ENCODE measurements at regions of chr1 and their contacts with region 1.

Region 1: DNA sequence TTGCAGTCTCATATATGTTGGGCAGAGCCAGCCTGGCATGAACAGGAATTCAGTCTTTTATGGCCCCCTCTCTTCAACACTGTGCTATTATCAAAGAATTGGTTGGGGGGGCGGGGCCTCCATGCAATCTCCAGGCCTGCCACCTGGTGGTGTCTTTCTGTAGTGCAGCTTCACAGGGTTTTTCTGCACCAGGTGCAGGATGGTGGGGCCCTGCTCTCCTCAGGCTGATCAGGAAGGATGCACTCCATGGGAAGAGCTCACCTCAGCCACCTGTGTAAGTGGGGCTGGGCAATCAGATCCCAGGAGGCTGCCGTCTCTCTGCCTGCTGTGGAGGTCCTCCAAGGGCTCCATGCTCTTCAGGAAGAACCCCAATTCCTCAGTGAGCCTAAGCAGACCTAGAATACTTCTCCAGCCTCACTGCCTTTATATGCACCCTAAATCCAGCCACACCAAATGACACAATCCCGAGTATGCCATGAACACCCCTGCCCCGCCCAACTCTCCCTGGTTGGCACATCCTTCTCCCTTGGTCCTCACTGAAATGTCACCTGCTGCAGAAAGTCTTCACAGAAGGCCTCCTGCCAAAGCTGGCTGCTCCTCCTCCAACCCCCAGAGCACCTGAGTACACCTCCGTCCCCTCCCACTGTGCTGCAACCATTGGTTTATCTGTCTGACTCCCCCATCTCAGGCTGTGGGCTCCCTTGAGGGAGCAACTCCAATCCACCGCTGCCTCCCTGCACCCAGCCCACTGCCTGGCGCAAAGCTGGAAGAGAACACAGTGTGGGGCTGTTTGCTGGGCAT is 16.5 kb downstream of the STK40 start:
- DNase-seq: peak; percentile 52 to 85
- ATAC-seq: peak; percentile 55 to 69; a peak in 5 of 6 replicates
- H3K4me3 ChIP-seq: no peak overlapping the region
- H3K27ac ChIP-seq: peak overlapping the region in 1 of 2 experiments; percentile 61; a peak in 3 of 6 replicates
- H3K4me1 ChIP-seq: peaks cover 38% of the 10 kb centered on the region
- CTCF ChIP-seq: peak; percentile 65
- EP300 ChIP-seq: no peak
- POLR2A ChIP-seq: no peak
- RAD21 ChIP-seq: peak; percentile 59 to 68

Region 2: GRCh38 chr1:36385410-36386257 is 16.4 kb after region 1 on chr1 and contains the start of gene STK40:
- CTCF ChIA-PET with region 1: interaction called, 10 read pairs
- POLR2A ChIA-PET with region 1: interaction called, 5 read pairs
- DNase-seq: peak; percentile 83 to 98
- ATAC-seq: peak; percentile 83 to 94
- H3K4me3 ChIP-seq: peak within 1 kb of the TSS; percentile 72
- H3K27ac ChIP-seq: peak within 1 kb of the TSS; percentile 96 to 100
- H3K4me1 ChIP-seq: peaks cover 28% of the 10 kb centered on the region
- CTCF ChIP-seq: no peak
- EP300 ChIP-seq: no peak
- POLR2A ChIP-seq: peak; percentile 29; the same call in 1 of the 2 replicates
- RAD21 ChIP-seq: no peak
- polyA plus RNA-seq, gene STK40: 8.9 and 10.5 TPM in 2 replicates

Region 3: DNA sequence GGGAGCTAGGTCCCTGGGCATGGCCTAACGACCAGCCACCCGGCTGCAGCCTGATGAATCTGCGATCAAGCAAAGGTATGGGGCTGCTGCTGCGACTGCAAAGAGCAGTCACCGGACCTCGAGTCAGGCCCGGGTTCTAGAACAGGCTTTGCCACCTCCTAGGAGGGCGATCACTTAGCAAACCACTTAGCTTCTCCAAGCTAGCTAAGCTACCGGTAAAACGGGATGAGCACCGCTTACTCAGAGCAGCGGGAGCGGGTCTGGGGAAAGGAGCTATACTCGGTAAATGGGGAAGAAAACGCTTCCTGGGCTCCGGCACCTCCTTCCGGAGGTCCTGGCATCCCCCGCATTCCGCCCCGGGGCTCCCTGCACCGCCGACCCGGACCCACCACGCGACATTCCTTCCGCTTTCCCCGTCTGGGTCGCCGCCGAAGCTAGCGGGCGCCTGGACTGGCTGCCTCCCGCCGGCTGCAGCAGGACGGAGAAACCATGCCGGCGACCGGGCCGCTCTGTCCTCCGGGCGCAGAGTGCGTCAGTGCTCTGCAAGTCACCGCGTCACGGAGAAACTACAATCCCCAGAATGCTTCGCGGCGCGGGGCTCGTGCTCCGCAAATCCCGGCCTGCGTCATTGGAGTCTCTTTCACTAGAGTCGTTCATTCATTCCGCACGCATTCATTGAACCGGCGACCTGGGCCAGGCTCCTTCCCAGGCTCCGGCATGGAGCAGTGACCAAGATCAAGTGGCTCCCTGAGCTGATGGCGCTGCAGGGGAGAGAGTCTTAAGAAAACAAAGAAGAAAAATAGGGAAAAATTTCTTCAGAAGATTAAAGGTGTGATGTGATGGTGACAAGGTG is 28.3 kb after region 1 on chr1 and contains the start of gene LSM10:
- CTCF ChIA-PET with region 1: interaction called, 11 read pairs
- POLR2A ChIA-PET with region 1: interaction called, 7 read pairs
- DNase-seq: peak; percentile 68 to 90
- ATAC-seq: peak; percentile 97
- H3K4me3 ChIP-seq: peak within 1 kb of the TSS; percentile 67
- H3K27ac ChIP-seq: peak within 1 kb of the TSS; percentile 88 to 99
- H3K4me1 ChIP-seq: peaks cover 9% of the 10 kb centered on the region; the same call in 1 of the 3 replicates
- CTCF ChIP-seq: no peak
- EP300 ChIP-seq: no peak
- POLR2A ChIP-seq: peak; percentile 68
- RAD21 ChIP-seq: no peak; a peak in 1 of 5 replicates
- polyA plus RNA-seq, gene LSM10: 44.3 and 54.9 TPM in 2 replicates

Region 4: GRCh38 chr1:36420836-36421664 is 51.8 kb after region 1 on chr1:
- CTCF ChIA-PET with region 1: interaction called, 14 read pairs
- POLR2A ChIA-PET with region 1: no interaction called
- DNase-seq: peak; percentile 42 to 80
- ATAC-seq: peak; percentile 98 to 99
- H3K4me3 ChIP-seq: no peak overlapping the region
- H3K27ac ChIP-seq: peak overlapping the region; percentile 48 to 75; a peak in 5 of 6 replicates
- H3K4me1 ChIP-seq: peaks cover 7% of the 10 kb centered on the region; the same call in 2 of the 3 replicates
- CTCF ChIP-seq: peak; percentile 78
- EP300 ChIP-seq: no peak
- POLR2A ChIP-seq: no peak
- RAD21 ChIP-seq: peak; percentile 91 to 95

Region 5: GRCh38 chr1:36471830-36472641 is 102.8 kb after region 1 on chr1:
- CTCF ChIA-PET with region 1: no interaction called
- POLR2A ChIA-PET with region 1: no interaction called
- DNase-seq: no peak
- ATAC-seq: peak; percentile 39 to 51; a peak in 4 of 6 replicates
- H3K4me3 ChIP-seq: no peak overlapping the region
- H3K27ac ChIP-seq: no peak overlapping the region
- H3K4me1 ChIP-seq: no peaks in the 10 kb centered on the region
- CTCF ChIP-seq: no peak
- EP300 ChIP-seq: no peak
- POLR2A ChIP-seq: no peak
- RAD21 ChIP-seq: no peak

Measured in A549 (cell line).